HCT116 (cell line): ENCODE measurements at regions of chr17 and their contacts with region 1.

Region 1: DNA sequence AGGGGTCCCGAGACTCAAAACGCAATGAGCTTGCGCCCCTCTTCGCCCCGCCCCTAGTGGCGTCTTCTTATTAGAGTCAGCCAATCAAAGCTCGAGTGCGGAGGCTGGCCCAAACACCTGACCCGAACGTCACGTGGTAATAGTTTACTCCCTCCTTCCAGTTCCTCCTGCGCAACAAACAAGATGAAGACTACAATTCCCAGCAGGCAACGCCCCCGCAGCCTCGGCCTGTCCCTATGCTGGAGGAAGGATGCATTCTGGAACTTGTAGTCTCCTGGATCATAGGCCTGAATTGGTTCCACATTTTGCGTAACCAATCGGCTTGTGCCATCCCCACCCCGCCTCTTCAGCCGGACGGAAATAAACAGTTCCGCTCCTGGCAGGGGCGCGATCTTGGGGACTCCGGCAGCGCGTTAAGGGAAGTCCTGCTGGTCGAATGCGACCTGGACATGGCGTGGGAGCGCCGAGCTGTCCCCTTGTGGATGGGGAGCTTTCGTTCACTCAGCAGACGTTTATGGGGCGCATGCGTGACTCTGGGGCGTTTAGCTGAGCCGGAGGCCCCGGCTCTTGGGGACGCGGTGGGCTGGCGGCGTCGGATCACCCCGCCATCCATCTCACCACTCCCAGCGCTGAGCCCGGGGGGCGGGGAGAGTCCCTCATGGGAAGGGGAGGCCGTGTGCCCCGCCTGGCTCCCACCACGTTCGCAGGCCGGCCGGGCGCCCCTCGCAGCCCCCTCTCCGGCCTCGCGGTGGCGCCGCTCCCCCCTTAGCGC is at the start of gene WBP2:
- DNase-seq: peak; percentile 100
- ATAC-seq: peak; percentile 91
- H3K4me3 ChIP-seq: peak within 1 kb of the TSS; percentile 75 to 86
- H3K27ac ChIP-seq: peak within 1 kb of the TSS; percentile 87
- H3K4me1 ChIP-seq: peaks cover 23 to 40% of the 10 kb centered on the region in 2 experiments
- H3K27me3 ChIP-seq: no peaks in the 10 kb centered on the region
- CTCF ChIP-seq: peak in 2 of 3 experiments; percentile 54 to 62; a peak in 4 of 6 replicates
- POLR2A ChIP-seq: peak; percentile 85
- RAD21 ChIP-seq: peak; percentile 58
- total RNA-seq, gene WBP2: 132 TPM

Region 2: DNA sequence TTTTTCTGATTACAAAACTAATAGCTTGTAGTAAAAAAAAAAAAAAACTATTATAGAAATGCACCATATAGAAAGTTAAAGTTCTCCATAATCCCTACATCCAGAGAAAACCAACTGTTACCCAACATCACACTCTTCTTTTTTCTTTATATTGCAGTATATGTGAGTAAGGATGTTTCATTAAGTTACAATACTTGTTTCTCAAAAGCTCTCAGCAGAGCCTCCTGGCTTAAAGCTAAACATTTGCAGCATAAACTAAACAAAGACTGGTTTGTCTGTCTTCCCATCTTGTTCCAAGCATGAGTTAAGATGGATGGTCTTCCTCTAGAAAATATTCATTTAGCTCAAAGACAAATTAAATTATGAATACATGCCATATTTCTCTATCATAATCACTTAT is 475.2 kb before region 1 on chr17:
- CTCF ChIA-PET with region 1: no interaction called
- POLR2A ChIA-PET with region 1: no interaction called
- RAD21 ChIA-PET with region 1: no interaction called
- intact Hi-C with region 1: no loop called
- DNase-seq: no peak
- ATAC-seq: no peak
- H3K4me3 ChIP-seq: no peak overlapping the region
- H3K27ac ChIP-seq: no peak overlapping the region
- H3K4me1 ChIP-seq: peaks cover 2 to 3% of the 10 kb centered on the region in 2 experiments; a peak in 2 of 4 replicates
- H3K27me3 ChIP-seq: no peaks in the 10 kb centered on the region
- CTCF ChIP-seq: no peak
- POLR2A ChIP-seq: no peak
- RAD21 ChIP-seq: no peak

Region 3: DNA sequence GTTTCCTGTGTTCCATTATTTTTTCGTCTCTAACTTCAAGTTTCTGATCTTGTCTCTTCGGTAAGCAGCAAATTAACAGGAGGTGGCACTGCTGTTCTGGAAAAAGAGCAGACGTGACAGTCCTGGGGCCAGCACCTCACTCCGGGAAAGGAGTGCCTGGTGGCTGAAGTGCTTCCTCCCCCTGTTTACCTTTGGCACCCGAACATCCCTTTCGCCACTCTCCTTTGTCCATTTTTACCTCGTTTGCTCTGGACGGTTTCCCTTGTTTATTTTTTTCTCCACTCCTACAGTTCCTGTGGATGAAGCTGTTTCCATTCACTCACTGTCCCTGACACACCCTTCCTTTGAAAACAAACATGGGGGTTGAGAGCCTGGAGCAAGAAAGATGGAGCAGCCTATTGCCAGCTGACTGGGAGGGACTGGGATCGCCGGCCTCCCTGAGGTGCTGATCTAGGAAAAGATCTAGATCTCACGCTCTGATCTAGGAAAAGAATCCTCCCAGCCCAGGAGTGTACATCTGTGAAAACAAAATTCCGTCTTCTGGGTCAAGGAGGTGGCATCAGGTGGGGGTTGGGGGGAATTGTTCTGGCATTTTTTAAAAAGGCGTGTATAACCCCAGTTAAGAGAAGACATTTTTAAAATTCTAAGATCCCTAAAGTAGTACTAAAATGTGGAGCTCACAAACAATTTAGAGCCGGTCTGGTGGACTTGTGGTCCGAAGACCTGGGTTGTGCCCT is 175.6 kb before region 1 on chr17:
- CTCF ChIA-PET with region 1: no interaction called
- POLR2A ChIA-PET with region 1: no interaction called
- RAD21 ChIA-PET with region 1: no interaction called
- intact Hi-C with region 1: loop called (anchors 10 kb)
- DNase-seq: no peak
- ATAC-seq: peak; percentile 33; the same call in 1 of the 2 replicates
- H3K4me3 ChIP-seq: no peak overlapping the region
- H3K27ac ChIP-seq: peak overlapping the region; percentile 48; the same call in 1 of the 2 replicates
- H3K4me1 ChIP-seq: peaks cover 52 to 74% of the 10 kb centered on the region in 2 experiments
- H3K27me3 ChIP-seq: no peaks in the 10 kb centered on the region
- CTCF ChIP-seq: peak; percentile 38 to 90 (median 51); a peak in 5 of 6 replicates
- POLR2A ChIP-seq: no peak
- RAD21 ChIP-seq: peak; percentile 96

Region 4: DNA sequence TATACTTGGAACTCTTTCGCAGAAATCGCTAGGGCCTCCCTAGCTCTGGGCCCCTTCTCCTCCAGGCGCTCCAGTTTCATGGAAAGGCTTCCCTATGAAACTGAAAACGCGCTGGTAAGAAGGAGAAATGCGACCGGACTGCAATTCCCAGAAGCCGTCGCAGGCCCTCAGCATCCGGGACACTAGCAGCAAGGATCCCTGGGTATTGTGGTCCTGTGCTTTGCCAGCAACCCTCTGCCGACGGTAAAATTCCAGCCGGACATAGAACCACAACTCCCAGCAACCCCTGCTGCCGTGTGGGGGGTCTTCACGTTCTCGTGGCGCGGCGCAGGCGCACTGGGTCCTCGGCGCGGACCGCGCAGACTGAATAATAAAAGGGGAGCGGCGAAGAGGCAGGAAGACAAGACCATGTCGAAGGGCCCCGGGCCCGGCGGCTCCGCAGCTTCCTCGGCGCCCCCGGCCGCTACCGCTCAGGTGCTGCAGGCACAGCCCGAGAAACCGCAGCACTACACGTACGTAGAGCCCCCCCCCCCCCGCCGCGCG is 71.0 kb before region 1 on chr17 and contains the start of gene UNK:
- CTCF ChIA-PET with region 1: interaction called, 20 read pairs
- POLR2A ChIA-PET with region 1: interaction called, 83 read pairs
- RAD21 ChIA-PET with region 1: interaction called, 3 read pairs
- intact Hi-C with region 1: loop called (anchors 2 kb)
- DNase-seq: peak; percentile 100
- ATAC-seq: peak; percentile 78
- H3K4me3 ChIP-seq: peak within 1 kb of the TSS; percentile 55 to 71
- H3K27ac ChIP-seq: peak within 1 kb of the TSS; percentile 99
- H3K4me1 ChIP-seq: peaks cover 40 to 65% of the 10 kb centered on the region in 2 experiments
- H3K27me3 ChIP-seq: no peaks in the 10 kb centered on the region
- CTCF ChIP-seq: no peak
- POLR2A ChIP-seq: no peak
- RAD21 ChIP-seq: no peak
- total RNA-seq, gene UNK: 40.6 TPM

Region 5: GRCh38 chr17:75845049-75845860 is 10.2 kb before region 1 on chr17:
- CTCF ChIA-PET with region 1: interaction called, 46 read pairs
- POLR2A ChIA-PET with region 1: interaction called, 42 read pairs
- RAD21 ChIA-PET with region 1: interaction called, 3 read pairs
- intact Hi-C with region 1: loop called (anchors 1 kb)
- DNase-seq: peak; percentile 96
- ATAC-seq: peak; percentile 86
- H3K4me3 ChIP-seq: peak overlapping the region; percentile 46 to 57
- H3K27ac ChIP-seq: peak overlapping the region; percentile 88
- H3K4me1 ChIP-seq: peaks cover 33 to 63% of the 10 kb centered on the region in 2 experiments
- H3K27me3 ChIP-seq: no peaks in the 10 kb centered on the region
- CTCF ChIP-seq: peak in 2 of 3 experiments; percentile 96 to 98; a peak in 5 of 6 replicates
- POLR2A ChIP-seq: no peak
- RAD21 ChIP-seq: no peak

Region 6: DNA sequence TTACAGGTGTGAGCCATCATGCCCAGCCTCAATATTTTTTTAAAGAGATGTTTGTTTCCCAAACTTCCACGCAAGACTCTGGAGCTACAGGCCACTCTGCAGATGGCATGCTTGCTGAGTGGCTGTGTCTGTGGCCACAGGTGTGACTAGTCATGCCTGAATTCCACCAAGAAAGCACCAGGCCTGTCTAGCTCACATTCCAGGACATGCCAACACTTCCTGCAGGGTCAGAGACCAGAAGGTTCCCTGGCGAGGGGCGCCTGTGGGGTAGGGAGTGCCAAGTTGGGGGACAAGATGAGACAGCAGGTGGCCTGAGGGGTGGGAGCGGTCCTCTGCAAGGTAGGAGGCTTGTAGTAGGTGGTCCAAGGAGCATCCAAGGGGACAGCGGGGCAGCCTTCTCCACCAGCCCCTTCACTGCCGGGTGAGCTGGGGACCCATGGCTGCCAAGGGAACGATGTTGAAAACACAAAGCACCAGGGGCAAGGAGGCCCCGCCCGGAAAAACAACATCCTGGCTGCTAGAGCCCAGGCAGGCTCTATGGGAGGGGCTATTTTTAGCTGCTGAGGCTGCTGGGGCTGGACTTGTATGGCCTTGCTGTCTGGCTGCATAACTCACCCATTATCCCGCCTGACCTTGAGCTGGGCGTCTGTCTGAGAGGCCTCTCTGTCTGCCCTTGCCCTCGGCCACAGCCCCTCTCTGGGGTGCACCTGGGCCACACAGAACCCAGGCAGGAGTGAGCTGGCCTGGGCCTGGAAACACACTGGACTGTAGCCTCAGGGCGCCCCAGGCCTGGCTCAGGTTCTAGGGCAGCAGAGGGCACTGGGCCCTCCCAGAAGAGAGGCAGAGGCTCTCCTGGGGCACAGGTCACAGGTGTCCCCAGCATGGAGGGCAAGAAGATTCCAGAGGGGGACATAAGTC is 17.2 kb after region 1 on chr17:
- CTCF ChIA-PET with region 1: interaction called, 57 read pairs
- POLR2A ChIA-PET with region 1: interaction called, 24 read pairs
- RAD21 ChIA-PET with region 1: interaction called, 5 to 6 read pairs
- intact Hi-C with region 1: loop called (anchors 1 kb)
- DNase-seq: no peak
- ATAC-seq: peak; percentile 47
- H3K4me3 ChIP-seq: peak overlapping the region in 1 of 2 experiments; percentile 24; a peak in 2 of 4 replicates
- H3K27ac ChIP-seq: peak overlapping the region; percentile 99
- H3K4me1 ChIP-seq: peaks cover 68 to 84% of the 10 kb centered on the region in 2 experiments
- H3K27me3 ChIP-seq: no peaks in the 10 kb centered on the region
- CTCF ChIP-seq: no peak
- POLR2A ChIP-seq: no peak
- RAD21 ChIP-seq: no peak

Region 7: GRCh38 chr17:75877752-75878173 is 22.3 kb after region 1 on chr17:
- CTCF ChIA-PET with region 1: interaction called, 57 read pairs
- POLR2A ChIA-PET with region 1: interaction called, 24 read pairs
- RAD21 ChIA-PET with region 1: interaction called, 5 to 6 read pairs
- intact Hi-C with region 1: loop called (anchors 1 kb)
- DNase-seq: no peak
- ATAC-seq: peak; percentile 49
- H3K4me3 ChIP-seq: peak overlapping the region; percentile 69 to 81
- H3K27ac ChIP-seq: peak overlapping the region; percentile 99
- H3K4me1 ChIP-seq: peaks cover 44 to 62% of the 10 kb centered on the region in 2 experiments
- H3K27me3 ChIP-seq: no peaks in the 10 kb centered on the region
- CTCF ChIP-seq: peak in 2 of 3 experiments; percentile 37 to 49; a peak in 3 of 6 replicates
- POLR2A ChIP-seq: peak; percentile 13
- RAD21 ChIP-seq: no peak